ENCODE measurements at regions of chr11 and their contacts with region 1.

Region 1: DNA sequence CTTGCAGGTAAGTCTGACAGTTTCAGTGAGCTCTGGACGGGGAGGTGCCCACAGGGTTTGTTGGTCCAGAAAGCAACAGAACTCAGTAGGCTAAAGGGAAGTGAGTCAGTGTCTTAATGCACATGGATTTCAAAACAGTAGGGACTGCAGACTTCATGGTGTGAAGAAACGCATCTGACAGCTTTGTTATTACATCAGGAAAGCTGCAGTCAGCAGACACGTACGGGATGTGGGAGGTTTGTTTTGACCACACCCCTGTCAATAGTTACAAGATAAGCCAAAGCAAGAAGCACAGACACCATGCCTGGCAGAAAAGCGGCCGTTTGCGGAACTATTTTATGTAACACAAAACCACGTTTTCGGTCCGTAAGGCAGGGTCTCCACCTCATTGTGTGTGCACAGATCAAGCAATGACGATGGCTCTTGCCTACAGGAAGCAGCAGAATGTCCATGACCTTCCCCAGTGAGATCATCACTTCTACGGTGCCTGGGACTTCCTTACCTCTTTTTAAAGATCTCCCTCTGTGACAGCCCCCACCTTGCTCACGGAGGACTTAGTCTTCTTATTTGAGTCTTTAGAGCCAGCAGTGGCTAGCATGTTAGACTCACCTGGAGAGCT is 58.2 kb upstream of the FTH1 start:
- DNase-seq: peak; percentile 84
- H3K4me3 Mint-ChIP-seq: peak overlapping the region; percentile 51
- H3K27ac Mint-ChIP-seq: peak overlapping the region; percentile 87
- H3K4me1 Mint-ChIP-seq: peaks cover 20% of the 10 kb centered on the region
- H3K27me3 Mint-ChIP-seq: no peaks in the 10 kb centered on the region

Region 2: GRCh38 chr11:61967116-61967923 is 58.3 kb before region 1 on chr11 and contains the start of gene FTH1:
- CTCF ChIA-PET with region 1: interaction called, 3 read pairs
- POLR2A ChIA-PET with region 1: interaction called, 12 read pairs
- intact Hi-C with region 1: loop called (anchors 1 kb)
- DNase-seq: peak; percentile 90
- H3K4me3 Mint-ChIP-seq: peak within 1 kb of the TSS; percentile 84
- H3K27ac Mint-ChIP-seq: peak within 1 kb of the TSS; percentile 93
- H3K4me1 Mint-ChIP-seq: peaks cover 68% of the 10 kb centered on the region
- H3K27me3 Mint-ChIP-seq: no peaks in the 10 kb centered on the region
- total RNA-seq, gene FTH1: 915 to 922 TPM

Region 3: GRCh38 chr11:62069986-62070919 is 44.7 kb after region 1 on chr11:
- CTCF ChIA-PET with region 1: no interaction called
- POLR2A ChIA-PET with region 1: no interaction called
- intact Hi-C with region 1: loop called (anchors 1 kb)
- DNase-seq: no peak
- H3K4me3 Mint-ChIP-seq: no peak overlapping the region
- H3K27ac Mint-ChIP-seq: no peak overlapping the region
- H3K4me1 Mint-ChIP-seq: peaks cover 15% of the 10 kb centered on the region
- H3K27me3 Mint-ChIP-seq: peaks cover 4% of the 10 kb centered on the region